ENCODE measurements at regions of chr10 and their contacts with region 1.

Region 1: DNA sequence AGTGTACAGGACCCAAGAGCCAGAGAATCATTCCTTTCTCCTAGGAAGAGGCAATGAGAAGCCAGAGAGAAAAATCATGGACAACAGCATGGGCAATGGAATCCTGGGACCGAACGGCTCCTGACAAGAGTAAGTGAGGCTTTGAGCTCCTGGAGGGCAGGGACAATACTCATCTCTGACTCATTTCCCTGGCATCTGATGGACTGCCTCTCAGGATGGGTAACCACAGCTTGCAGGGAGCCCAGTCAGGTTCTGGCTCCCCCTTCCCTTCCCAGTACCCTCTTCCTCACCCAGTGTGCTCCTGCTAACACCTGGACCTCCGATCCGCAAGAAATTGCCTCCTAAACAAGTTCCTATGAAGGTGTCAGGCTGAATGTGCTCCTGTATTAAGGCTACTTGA is 51.2 kb upstream of the SORCS3 start:
- DNase-seq: no peak
- H3K4me3 ChIP-seq: no peak overlapping the region
- H3K27ac ChIP-seq: no peak overlapping the region
- H3K4me1 ChIP-seq: peaks cover 0 to 3% (median 0%) of the 10 kb centered on the region in 4 experiments; a peak in 2 of 7 replicates
- H3K27me3 ChIP-seq: no peaks in the 10 kb centered on the region
- CTCF ChIP-seq: no peak
- EP300 ChIP-seq: no peak
- POLR2A ChIP-seq: no peak
- RAD21 ChIP-seq: no peak

Region 2: DNA sequence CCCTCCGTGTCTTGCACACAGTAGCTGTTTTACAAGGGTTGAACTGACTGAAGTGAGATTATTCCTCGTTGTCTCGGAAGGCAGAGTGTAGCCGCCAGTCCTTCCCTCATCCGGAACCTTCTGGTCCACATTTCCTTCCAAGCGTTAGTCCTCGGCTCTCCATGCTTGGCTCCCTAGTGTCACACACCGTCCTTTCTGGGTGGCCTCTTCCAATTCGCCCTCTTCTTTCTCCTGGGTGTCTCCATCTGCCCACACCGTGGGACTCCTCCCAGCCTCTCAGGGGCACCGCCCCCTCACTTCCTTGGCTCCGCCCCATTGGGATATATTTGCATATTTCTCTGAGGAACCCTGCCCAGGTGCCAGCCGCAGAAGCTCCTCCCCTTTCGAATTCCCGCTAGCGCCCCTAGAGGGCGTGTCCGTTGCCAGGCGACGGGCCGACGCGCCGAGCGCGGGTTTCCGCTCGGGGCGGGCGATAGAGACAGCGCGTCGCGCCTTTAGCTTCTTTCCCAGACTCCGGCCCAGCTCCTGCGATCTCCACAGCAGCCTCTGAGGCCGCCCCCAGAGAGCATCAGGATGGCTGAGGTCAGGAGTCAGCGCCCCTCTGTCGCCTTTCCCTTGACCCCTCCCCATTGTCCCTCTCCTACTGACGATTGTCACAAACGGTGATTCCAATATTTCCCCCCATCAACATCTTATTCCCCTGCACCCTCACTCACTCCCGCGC is 236.4 kb before region 1 on chr10 and contains the start of gene CFAP58:
- CTCF ChIA-PET with region 1: no interaction called
- POLR2A ChIA-PET with region 1: no interaction called
- DNase-seq: peak; percentile 79 to 98
- H3K4me3 ChIP-seq: peak within 1 kb of the TSS; percentile 35 to 71 (median 52); a peak in 7 of 8 replicates
- H3K27ac ChIP-seq: no peak within 1 kb of the TSS
- H3K4me1 ChIP-seq: peaks cover 0 to 9% (median 1%) of the 10 kb centered on the region in 4 experiments; a peak in 2 of 7 replicates
- H3K27me3 ChIP-seq: peaks cover 5 to 13% (median 10%) of the 10 kb centered on the region in 4 experiments
- CTCF ChIP-seq: peak; percentile 67 to 80 (median 69)
- EP300 ChIP-seq: no peak
- POLR2A ChIP-seq: no peak
- RAD21 ChIP-seq: peak; percentile 12 to 27; a peak in 2 of 4 replicates
- total RNA-seq, gene CFAP58: 0.71 and 1.1 TPM in 2 replicates

Region 3: GRCh38 chr10:104614245-104614831 is 24.5 kb after region 1 on chr10:
- CTCF ChIA-PET with region 1: interaction called, 101 read pairs
- POLR2A ChIA-PET with region 1: no interaction called
- DNase-seq: peak in 1 of 2 experiments; percentile 82
- H3K4me3 ChIP-seq: no peak overlapping the region
- H3K27ac ChIP-seq: no peak overlapping the region
- H3K4me1 ChIP-seq: no peaks in the 10 kb centered on the region
- H3K27me3 ChIP-seq: no peaks in the 10 kb centered on the region
- CTCF ChIP-seq: peak; percentile 49 to 71 (median 66)
- EP300 ChIP-seq: no peak
- POLR2A ChIP-seq: no peak
- RAD21 ChIP-seq: peak; percentile 56 to 71

Region 4: DNA sequence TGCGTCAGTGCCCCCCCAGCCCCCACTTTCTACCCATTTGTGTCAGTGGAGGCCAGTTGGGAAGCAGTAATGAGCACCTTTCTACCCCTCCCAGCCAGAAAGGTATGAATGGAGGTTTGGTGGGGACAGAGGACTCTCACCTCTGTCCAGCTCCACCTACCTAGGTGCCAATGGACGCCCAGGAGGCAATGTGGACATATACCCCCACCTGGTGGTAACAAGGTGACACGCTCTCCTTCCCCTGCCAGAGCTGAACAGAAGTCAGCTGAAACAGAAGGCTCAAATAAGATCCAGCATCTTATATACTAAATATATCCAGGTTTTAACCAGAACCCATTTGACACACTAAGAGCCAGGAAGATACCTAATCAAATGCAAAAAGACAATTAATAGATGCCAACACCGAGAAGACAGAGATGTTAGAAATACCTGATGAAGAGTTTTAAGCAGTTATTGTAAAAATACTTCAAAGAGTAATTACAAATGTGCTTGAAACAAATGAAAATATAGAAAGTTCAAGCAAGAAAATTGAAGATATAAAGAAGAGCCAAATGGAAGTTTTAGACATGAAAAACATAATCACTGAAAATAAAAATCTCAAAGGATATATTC is 32.8 kb after region 1 on chr10:
- CTCF ChIA-PET with region 1: interaction called, 101 read pairs
- POLR2A ChIA-PET with region 1: no interaction called
- DNase-seq: peak in 1 of 2 experiments; percentile 60
- H3K4me3 ChIP-seq: no peak overlapping the region
- H3K27ac ChIP-seq: no peak overlapping the region
- H3K4me1 ChIP-seq: no peaks in the 10 kb centered on the region
- H3K27me3 ChIP-seq: no peaks in the 10 kb centered on the region
- CTCF ChIP-seq: peak; percentile 88 to 95 (median 91)
- EP300 ChIP-seq: no peak
- POLR2A ChIP-seq: no peak
- RAD21 ChIP-seq: peak; percentile 98 to 99